ENCODE measurements at regions of chr3 and their contacts with region 1.

Region 1: GRCh38 chr3:157088601-157089454 is 71.1 kb downstream of the CCNL1 start:
- DNase-seq: peak; percentile 91
- ATAC-seq: peak; percentile 93
- H3K4me3 ChIP-seq: peak overlapping the region; percentile 56 to 67 (median 58)
- H3K27ac ChIP-seq: peak overlapping the region; percentile 96
- H3K4me1 ChIP-seq: peaks cover 43% of the 10 kb centered on the region
- H3K27me3 ChIP-seq: no peaks in the 10 kb centered on the region
- CTCF ChIP-seq: peak; percentile 54
- EP300 ChIP-seq: peak in 1 of 2 experiments; percentile 72; a peak in 1 of 4 replicates
- POLR2A ChIP-seq: peak; percentile 49 to 83
- RAD21 ChIP-seq: 0 out of 2 replicates have a peak, but pooled peaks have one; percentile 35

Region 2: DNA sequence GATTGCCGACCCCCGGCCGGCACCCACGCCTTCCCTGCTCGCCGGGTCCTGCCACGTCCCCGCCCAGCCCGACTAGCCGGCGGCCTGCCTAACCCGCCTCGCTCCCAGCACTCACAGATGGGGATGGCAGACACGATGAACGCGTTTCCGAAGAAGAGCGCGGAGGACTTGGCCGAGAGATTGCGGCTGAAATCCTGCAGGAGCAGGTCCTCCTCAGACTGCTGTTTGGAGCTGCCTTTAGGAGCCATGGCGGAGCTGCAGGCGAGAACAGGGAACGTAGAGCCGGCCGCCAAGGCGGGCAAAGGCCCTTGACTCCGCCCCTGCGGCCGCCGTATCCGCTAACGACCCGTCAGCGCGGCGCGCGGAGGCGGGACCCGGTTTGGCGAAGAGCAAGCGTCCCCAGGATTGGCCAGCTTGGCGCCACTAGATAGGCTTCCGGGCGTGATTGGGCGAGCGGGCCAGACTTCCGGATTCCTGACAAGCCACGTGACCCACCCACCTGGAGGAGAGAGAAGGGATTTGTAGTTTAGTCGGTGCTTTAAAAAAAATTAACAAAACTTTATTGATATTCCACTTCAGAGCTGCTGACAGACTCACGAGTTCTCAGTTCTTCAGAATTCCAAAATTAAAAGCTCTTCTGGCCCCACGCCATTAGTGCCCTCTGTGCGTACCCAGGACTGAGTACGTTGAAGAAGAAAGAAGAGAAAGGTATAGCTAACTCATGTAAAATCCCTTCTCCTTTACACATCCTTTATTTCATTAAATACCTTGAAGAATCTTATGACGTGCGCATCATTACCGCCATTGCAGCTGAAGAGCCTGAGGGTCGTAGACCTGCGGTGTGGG is 533.8 kb before region 1 on chr3 and contains the start of gene SSR3:
- CTCF ChIA-PET with region 1: no interaction called
- POLR2A ChIA-PET with region 1: interaction called, 13 read pairs
- in situ Hi-C with region 1: no loop called
- intact Hi-C with region 1: no loop called
- DNase-seq: peak; percentile 96
- ATAC-seq: peak; percentile 99
- H3K4me3 ChIP-seq: peak within 1 kb of the TSS; percentile 85 to 100 (median 91)
- H3K27ac ChIP-seq: peak within 1 kb of the TSS; percentile 94
- H3K4me1 ChIP-seq: peaks cover 38% of the 10 kb centered on the region
- H3K27me3 ChIP-seq: no peaks in the 10 kb centered on the region; a peak in 2 of 5 replicates
- CTCF ChIP-seq: no peak
- EP300 ChIP-seq: peak in 1 of 2 experiments; percentile 35; a peak in 2 of 4 replicates
- POLR2A ChIP-seq: peak; percentile 88 to 98
- RAD21 ChIP-seq: no peak; the same call in 1 of the 2 replicates
- total RNA-seq, gene SSR3: 268 and 325 TPM in 2 replicates

Region 3: GRCh38 chr3:156891665-156892064 is 197.2 kb before region 1 on chr3:
- CTCF ChIA-PET with region 1: no interaction called
- POLR2A ChIA-PET with region 1: no interaction called
- in situ Hi-C with region 1: no loop called
- intact Hi-C with region 1: no loop called
- DNase-seq: peak; percentile 3
- ATAC-seq: no peak
- H3K4me3 ChIP-seq: no peak overlapping the region
- H3K27ac ChIP-seq: no peak overlapping the region
- H3K4me1 ChIP-seq: peaks cover 6% of the 10 kb centered on the region; the same call in 1 of the 2 replicates
- H3K27me3 ChIP-seq: no peaks in the 10 kb centered on the region
- CTCF ChIP-seq: no peak
- EP300 ChIP-seq: no peak
- POLR2A ChIP-seq: no peak
- RAD21 ChIP-seq: no peak

Region 4: DNA sequence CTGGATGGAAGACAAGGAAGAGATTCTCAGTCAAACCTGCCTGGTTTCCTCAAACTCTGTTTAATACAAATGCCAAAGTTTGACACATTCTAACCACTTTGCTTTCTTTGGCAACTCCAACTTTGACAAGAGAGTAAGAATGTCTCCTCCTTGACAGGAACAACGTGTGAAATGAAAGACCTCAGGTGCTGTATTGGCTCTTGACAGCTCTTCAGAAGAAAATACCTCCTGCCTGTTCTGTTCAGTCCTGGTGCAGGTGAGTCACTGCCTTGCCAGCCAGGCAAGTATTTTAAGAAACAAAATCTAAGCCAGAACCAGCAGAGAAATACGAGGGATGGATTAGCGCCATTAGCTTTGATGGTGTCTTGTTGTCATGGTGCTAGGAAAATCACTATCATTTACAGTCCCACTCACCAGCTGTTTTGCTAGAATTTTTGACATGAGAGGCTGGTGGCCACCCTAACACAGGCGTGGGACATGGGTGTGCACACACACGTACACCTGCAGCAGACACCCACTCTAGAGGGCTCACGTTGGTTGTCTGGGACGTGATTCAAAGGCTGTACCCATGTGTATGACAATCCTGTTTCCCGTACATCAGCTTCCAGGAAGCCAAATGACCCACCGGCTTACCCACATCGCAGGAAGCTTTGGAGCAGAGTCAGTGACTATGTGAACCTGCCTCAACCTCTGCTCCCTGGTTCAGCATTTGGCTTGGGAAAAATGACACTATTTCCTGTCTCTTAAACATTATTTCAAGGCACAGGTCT is 10.7 kb after region 1 on chr3:
- CTCF ChIA-PET with region 1: no interaction called
- POLR2A ChIA-PET with region 1: interaction called, 27 read pairs
- in situ Hi-C with region 1: no loop called
- intact Hi-C with region 1: no loop called
- DNase-seq: no peak
- ATAC-seq: no peak
- H3K4me3 ChIP-seq: no peak overlapping the region
- H3K27ac ChIP-seq: no peak overlapping the region
- H3K4me1 ChIP-seq: peaks cover 45% of the 10 kb centered on the region
- H3K27me3 ChIP-seq: no peaks in the 10 kb centered on the region
- CTCF ChIP-seq: no peak
- EP300 ChIP-seq: no peak
- POLR2A ChIP-seq: no peak
- RAD21 ChIP-seq: no peak

Region 5: DNA sequence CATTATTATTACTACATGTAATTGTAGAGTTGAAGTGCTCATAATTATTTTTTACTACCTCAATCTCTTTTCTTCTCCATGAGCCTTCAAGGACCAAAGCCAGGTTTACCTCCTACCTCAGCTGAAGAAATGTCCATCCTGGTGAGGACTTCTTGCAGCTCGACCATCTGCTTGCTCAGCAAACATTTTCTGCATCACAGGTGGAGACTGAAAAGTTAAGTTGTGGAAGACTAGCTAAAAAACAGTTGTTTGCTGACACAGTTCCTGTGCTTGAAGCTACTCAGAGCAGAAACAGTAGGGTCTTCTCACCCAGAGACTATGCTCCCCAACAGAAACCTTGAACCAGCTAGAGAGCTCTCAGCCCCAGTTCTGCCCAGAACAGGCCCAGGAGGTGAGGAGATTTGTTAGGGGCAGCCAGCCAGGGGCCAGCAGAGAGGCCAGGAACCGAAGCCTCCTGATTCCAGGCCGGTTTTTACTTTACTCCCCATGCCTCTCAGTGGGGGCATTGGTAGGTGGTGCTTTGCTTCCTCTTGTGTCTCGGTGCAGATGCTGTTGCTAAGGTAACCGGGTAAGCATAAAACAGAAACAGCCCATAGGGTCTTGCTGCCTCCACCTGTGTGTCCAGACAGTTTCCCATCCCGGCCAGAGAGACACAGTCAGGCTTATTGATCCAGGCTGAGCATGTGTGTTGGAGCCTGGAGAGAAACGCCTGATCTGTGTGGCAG is 16.3 kb after region 1 on chr3:
- CTCF ChIA-PET with region 1: no interaction called
- POLR2A ChIA-PET with region 1: interaction called, 166 read pairs
- in situ Hi-C with region 1: no loop called
- intact Hi-C with region 1: no loop called
- DNase-seq: no peak
- ATAC-seq: peak; percentile 35
- H3K4me3 ChIP-seq: no peak overlapping the region
- H3K27ac ChIP-seq: no peak overlapping the region
- H3K4me1 ChIP-seq: peaks cover 44% of the 10 kb centered on the region
- H3K27me3 ChIP-seq: no peaks in the 10 kb centered on the region
- CTCF ChIP-seq: no peak
- EP300 ChIP-seq: no peak
- POLR2A ChIP-seq: no peak
- RAD21 ChIP-seq: no peak

Region 6: GRCh38 chr3:157122116-157122515 is 33.3 kb after region 1 on chr3:
- CTCF ChIA-PET with region 1: no interaction called
- POLR2A ChIA-PET with region 1: interaction called, 204 read pairs
- in situ Hi-C with region 1: loop called (anchors 5 kb)
- intact Hi-C with region 1: loop called (anchors 2 kb)
- DNase-seq: peak; percentile 43
- ATAC-seq: no peak
- H3K4me3 ChIP-seq: no peak overlapping the region
- H3K27ac ChIP-seq: peak overlapping the region; percentile 23
- H3K4me1 ChIP-seq: peaks cover 86% of the 10 kb centered on the region
- H3K27me3 ChIP-seq: no peaks in the 10 kb centered on the region
- CTCF ChIP-seq: no peak
- EP300 ChIP-seq: peak in 1 of 2 experiments; percentile 40; a peak in 1 of 4 replicates
- POLR2A ChIP-seq: no peak
- RAD21 ChIP-seq: no peak

Region 7: GRCh38 chr3:157174649-157175498 is 86.0 kb after region 1 on chr3:
- CTCF ChIA-PET with region 1: no interaction called
- POLR2A ChIA-PET with region 1: interaction called, 25 read pairs
- in situ Hi-C with region 1: no loop called
- intact Hi-C with region 1: no loop called
- DNase-seq: peak; percentile 98
- ATAC-seq: peak; percentile 95
- H3K4me3 ChIP-seq: peak overlapping the region; percentile 74 to 88 (median 74)
- H3K27ac ChIP-seq: peak overlapping the region; percentile 88
- H3K4me1 ChIP-seq: peaks cover 35% of the 10 kb centered on the region
- H3K27me3 ChIP-seq: no peaks in the 10 kb centered on the region; a peak in 1 of 5 replicates
- CTCF ChIP-seq: no peak; the same call in 1 of the 2 replicates
- EP300 ChIP-seq: peak; percentile 24 to 56; a peak in 3 of 4 replicates
- POLR2A ChIP-seq: peak; percentile 92 to 93
- RAD21 ChIP-seq: peak; percentile 37; the same call in 1 of the 2 replicates

Measured in HepG2 (cell line).